Transverse colon (tissue), 4 donors: ENCODE measurements at regions of chr2 and their contacts with region 1.

Region 1: GRCh38 chr2:220736777-220737176 is 835.3 kb downstream of the EPHA4 start:
- DNase-seq: no peak
- H3K4me3 ChIP-seq: no peak overlapping the region
- H3K27ac ChIP-seq: no peak overlapping the region
- H3K4me1 ChIP-seq: no peaks in the 10 kb centered on the region
- H3K27me3 ChIP-seq: no peaks in the 10 kb centered on the region
- CTCF ChIP-seq: no peak
- EP300 ChIP-seq: no peak
- POLR2A ChIP-seq: no peak

Region 2: DNA sequence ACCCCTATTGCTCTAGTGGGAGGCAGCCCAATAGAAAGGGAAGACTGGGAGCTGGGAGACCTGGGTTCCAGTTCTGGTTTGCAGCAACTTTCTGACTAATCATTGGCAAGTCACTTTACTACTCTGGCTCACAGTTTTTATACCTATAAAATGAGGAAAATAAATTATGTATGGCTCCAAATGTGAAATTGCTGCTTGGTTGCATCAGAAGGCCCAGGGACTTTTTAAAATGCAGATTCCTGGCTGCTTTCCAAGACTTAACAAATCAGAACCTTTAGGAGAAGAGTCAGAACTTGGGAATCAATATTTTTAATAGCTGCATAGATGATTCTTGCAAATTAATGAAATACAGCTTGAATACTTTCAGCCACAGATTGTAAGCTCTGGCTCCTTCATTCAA is 108.5 kb before region 1 on chr2:
- in situ Hi-C with region 1: no loop called
- intact Hi-C with region 1: no loop called
- DNase-seq: no peak
- H3K4me3 ChIP-seq: no peak overlapping the region
- H3K27ac ChIP-seq: no peak overlapping the region
- H3K4me1 ChIP-seq: no peaks in the 10 kb centered on the region
- H3K27me3 ChIP-seq: no peaks in the 10 kb centered on the region
- CTCF ChIP-seq: no peak
- EP300 ChIP-seq: no peak
- POLR2A ChIP-seq: no peak

Region 3: DNA sequence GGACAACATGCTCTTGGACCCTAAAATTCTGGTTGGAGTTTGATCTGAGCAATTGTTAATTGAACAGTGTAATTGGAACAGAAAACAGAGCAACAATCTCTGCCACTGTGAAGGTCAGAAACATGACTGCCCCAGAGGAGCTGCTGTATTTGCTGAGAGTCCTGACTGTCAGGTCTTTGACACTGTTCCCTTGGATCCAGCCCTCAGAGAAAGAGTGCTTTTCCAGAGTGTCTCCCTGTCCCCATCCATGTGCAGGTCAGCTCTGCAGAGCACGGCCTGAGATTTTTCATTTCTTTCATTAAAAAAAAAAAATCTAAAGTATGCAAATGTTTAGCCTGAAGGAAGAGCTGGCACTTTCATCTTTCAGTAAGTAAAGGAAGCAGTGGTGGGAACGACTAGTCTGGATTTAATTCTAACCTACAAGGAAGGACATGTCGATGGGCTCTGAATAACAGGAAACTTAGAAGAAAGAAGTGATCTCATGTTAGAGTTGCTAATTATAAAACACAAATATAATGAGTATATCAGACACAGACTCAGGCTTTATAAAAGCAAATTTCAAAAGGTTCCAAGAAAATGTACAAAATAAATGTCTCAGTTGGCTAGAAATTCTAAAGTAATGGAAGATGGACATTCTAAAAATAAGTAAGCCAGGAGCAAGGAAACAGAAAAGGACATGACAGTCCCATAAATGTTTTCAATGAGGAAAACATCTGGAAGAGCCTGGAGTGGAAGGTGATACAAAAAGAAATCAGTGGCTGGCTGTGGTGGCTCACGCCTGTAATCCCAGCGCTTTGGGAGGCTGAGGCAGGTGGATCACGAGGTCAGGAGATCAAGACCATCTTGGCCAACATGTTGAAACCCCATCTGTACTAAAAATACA is 41.1 kb before region 1 on chr2:
- in situ Hi-C with region 1: no loop called
- intact Hi-C with region 1: loop called (anchors 1 kb)
- DNase-seq: no peak
- H3K4me3 ChIP-seq: no peak overlapping the region
- H3K27ac ChIP-seq: no peak overlapping the region
- H3K4me1 ChIP-seq: no peaks in the 10 kb centered on the region
- H3K27me3 ChIP-seq: no peaks in the 10 kb centered on the region
- CTCF ChIP-seq: no peak
- EP300 ChIP-seq: no peak
- POLR2A ChIP-seq: no peak